HEK293 (cell line): ENCODE measurements at regions of chr15 and their contacts with region 1.

Region 1: DNA sequence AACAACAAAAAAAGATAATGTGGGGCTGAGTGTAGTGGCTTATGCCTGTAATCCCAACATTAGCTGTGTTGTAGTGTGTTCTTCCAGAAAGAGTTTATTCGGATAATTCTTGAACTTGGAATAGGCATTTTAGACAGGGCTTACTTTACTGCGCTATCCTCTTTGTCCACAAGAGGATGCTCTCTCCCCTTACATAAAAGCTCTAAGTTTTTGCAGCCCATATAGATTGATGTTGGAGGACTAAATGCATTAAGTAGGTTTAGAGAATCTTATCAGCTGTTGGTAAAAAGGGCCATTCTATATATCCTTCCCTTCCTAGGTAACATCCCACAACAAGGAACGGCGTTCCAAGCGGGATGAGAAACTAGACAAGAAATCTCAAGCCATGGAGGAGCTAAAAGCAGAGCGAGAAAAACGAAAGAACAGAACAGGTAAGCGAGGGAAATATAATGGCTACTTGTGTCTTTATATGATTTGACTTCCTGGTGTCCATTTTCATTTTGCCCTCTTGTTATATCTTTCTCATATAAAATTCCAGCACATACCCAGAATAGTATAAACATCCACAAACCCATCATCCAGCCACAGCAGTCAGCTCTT is 27.8 kb upstream of the ITPKA start:
- H3K4me3 ChIP-seq: no peak overlapping the region
- H3K27ac ChIP-seq: no peak overlapping the region
- H3K4me1 ChIP-seq: no peaks in the 10 kb centered on the region
- CTCF ChIP-seq: peak; percentile 67; the same call in 1 of the 2 replicates

Region 2: DNA sequence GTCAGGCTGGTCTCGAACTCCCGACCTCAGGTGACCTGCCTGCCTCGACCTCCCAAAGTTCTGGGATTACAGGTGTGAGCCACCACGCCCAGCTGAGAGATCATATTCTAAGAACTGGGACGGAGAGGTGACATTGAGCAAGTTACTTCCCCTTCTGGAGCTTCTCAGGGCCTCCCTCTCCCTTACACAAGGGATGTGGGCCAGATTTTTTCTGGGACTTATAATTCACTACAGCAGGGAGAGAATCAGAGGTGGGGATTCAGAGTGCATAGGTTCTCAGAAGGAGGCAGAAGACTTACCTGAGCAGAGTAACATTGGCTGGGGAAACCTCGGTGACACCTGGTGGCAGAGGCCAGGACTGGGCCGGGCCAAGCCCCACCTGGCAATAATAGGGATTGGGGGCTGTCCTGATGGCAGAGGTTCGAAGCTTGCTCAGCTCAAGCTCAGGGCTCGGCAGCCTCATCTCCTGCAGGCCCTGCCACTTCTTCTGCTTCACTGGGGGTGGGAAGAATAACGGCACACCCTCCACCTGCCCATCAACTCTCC is 40.9 kb after region 1 on chr15:
- CTCF ChIA-PET with region 1: interaction called, 13 read pairs
- POLR2A ChIA-PET with region 1: no interaction called
- H3K4me3 ChIP-seq: no peak overlapping the region
- H3K27ac ChIP-seq: no peak overlapping the region
- H3K4me1 ChIP-seq: no peaks in the 10 kb centered on the region
- CTCF ChIP-seq: peak; percentile 17; the same call in 1 of the 2 replicates